ENCODE measurements at regions of chr19 and their contacts with region 1.

Region 1: GRCh38 chr19:39970675-39971379 is at the start of gene PSMC4:
- DNase-seq: peak; percentile 96 to 100 (median 98)

Region 2: DNA sequence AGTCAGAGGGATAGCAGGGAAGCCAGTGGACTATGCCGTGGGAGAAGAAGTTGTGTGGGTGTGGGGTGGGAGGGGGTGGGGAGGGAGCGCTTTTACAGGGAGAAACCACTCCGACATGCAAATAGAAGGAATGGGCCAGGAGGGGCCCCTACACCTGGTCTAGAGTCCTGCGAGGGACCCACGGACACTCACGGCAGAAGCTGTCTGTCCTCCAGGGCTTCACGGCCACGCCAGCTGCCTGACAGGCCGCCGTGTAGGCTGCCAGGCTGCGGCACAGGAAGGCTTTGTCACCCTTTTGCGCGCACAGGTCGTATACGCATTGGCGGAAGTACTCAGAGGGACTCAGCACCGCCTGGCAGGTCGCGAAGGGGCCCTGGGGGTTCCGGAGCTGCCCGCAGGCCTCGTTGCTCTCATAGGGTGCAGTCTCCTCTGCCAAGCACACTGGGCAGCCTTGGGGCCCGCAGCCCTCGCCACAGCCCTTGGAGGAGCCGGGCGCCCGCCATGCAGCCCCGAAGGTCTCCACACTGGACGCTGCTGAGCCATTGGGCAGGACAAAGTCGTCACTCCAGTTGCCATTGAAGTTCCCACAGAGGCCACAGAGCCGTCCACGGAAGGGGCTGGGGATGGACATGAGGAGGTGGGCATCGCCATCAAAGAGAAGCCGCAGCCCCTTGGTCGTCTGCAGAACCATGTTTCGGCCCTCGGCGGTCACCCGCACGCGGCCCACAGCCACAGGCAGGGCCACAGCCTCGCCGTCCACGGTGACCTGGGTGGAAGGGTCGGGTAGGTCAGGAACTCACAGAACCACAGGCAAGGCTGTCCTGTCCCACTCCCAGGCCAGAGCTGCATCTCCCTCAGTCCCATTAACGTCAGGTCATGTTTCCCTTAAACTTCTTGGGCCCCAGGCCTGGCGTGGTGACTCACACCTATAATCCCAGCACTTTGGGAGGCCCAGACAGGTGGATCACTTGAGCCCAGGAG is 98.7 kb before region 1 on chr19:
- intact Hi-C with region 1: no loop called
- DNase-seq: no peak

Region 3: DNA sequence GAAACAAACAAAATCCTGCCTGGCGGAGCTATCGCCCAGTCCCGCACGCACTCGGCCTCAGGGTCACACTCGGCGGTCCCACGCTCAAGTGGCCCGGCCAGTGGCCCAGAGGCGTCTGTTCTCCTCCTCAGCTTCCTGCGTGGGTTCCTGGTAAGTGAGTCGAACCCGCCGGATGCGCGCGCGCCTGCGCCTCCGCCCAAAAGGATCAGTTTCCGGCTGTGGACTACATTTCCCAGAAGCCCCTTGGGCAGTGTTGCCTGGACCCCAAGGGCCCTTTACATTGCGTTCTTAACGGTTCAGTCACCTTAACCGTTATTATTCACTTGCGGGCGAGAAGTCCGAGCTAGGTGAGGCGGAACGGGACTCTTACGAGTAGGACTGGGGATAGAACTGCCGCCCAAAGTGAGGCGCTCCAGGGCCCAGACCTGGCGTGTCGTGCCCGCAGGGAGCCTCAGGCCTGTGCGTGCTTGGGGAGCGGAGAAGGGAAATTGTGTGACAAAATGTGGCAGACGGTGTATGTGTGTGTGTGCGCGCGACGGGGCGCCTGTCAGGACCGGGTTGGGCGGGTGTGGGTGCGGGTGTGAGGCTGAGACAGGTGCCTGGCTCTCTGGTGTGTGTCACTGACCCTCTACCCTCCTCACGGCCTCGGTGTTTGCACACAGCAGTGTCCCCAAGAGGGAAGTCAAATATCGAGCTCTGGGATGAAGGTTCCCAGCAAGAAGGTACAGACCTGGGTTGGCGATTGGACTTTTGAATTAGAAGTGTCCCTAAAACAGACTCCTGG is 26.2 kb after region 1 on chr19 and contains the start of gene ZNF546:
- intact Hi-C with region 1: loop called (anchors 2 kb)
- DNase-seq: peak; percentile 87 to 97 (median 92)